MCF 10A (cell line): ENCODE measurements at regions of chr19 and their contacts with region 1.

Region 1: GRCh38 chr19:54390942-54391577 is 24.2 kb upstream of the TTYH1 start:
- DNase-seq: peak; percentile 69
- H3K4me3 Mint-ChIP-seq: no peak overlapping the region
- H3K27ac Mint-ChIP-seq: no peak overlapping the region
- H3K4me1 Mint-ChIP-seq: peaks cover 6% of the 10 kb centered on the region
- H3K27me3 Mint-ChIP-seq: peaks cover 40% of the 10 kb centered on the region
- CTCF ChIP-seq: peak; percentile 76

Region 2: GRCh38 chr19:54168174-54168917 is 222.7 kb before region 1 on chr19:
- CTCF ChIA-PET with region 1: interaction called, 15 read pairs
- POLR2A ChIA-PET with region 1: no interaction called
- intact Hi-C with region 1: no loop called
- DNase-seq: peak; percentile 86
- H3K4me3 Mint-ChIP-seq: no peak overlapping the region
- H3K27ac Mint-ChIP-seq: no peak overlapping the region
- H3K4me1 Mint-ChIP-seq: peaks cover 6% of the 10 kb centered on the region
- H3K27me3 Mint-ChIP-seq: no peaks in the 10 kb centered on the region
- CTCF ChIP-seq: peak; percentile 82

Region 3: DNA sequence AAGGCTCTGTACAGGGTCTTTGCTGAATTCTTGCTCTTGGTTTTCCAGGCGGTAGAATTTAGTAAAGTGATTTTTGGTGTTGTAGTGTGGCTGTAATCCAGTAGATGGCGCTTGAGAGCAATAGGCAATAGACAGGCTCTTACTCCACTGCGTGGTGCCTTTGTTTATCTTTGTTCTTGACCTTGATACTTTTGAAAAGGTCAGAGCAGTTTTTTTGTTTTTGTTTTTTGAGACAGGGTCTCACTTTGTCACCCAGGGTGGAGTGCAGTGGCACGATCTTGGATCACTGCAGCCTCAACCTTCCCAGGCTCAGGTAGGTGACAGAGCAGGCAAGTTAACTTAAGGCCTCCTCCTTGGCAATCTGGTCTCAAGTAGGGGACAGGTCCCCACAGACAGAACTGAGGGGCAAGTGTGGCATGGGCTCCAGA is 65.9 kb before region 1 on chr19:
- CTCF ChIA-PET with region 1: interaction called, 79 read pairs
- POLR2A ChIA-PET with region 1: no interaction called
- intact Hi-C with region 1: loop called (anchors 1 kb)
- DNase-seq: peak; percentile 54
- H3K4me3 Mint-ChIP-seq: no peak overlapping the region
- H3K27ac Mint-ChIP-seq: no peak overlapping the region
- H3K4me1 Mint-ChIP-seq: no peaks in the 10 kb centered on the region
- H3K27me3 Mint-ChIP-seq: peaks cover 37% of the 10 kb centered on the region
- CTCF ChIP-seq: peak; percentile 72

Region 4: DNA sequence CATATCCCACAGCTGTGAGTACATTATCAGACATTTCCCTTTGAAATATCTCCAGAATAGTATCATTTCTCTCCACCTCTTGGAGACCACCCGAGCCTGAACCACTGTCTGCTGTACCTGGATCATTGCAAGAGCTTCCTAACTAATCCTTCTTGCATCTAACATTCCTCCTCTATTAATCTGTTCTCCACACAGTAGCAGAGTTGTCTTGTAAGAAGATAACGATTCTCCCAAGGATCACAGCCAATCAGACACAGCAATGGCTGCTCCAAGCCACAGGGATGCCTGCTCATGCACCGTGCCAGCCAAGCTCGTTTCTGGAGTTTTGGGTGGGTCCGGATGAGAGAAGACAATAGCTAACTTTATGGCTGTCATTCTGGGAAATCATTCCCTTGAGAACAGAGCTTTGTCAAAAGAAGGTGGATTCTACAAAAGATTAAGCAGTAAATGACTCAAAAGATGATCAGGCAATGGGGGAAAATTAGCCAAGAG is 11.8 kb before region 1 on chr19:
- CTCF ChIA-PET with region 1: interaction called, 22 read pairs
- POLR2A ChIA-PET with region 1: no interaction called
- intact Hi-C with region 1: no loop called
- DNase-seq: no peak
- H3K4me3 Mint-ChIP-seq: no peak overlapping the region
- H3K27ac Mint-ChIP-seq: no peak overlapping the region
- H3K4me1 Mint-ChIP-seq: no peaks in the 10 kb centered on the region
- H3K27me3 Mint-ChIP-seq: peaks cover 10% of the 10 kb centered on the region
- CTCF ChIP-seq: no peak

Region 5: GRCh38 chr19:54418030-54418929 is 27.2 kb after region 1 on chr19:
- CTCF ChIA-PET with region 1: interaction called, 10 read pairs
- POLR2A ChIA-PET with region 1: no interaction called
- intact Hi-C with region 1: no loop called
- DNase-seq: no peak
- H3K4me3 Mint-ChIP-seq: no peak overlapping the region
- H3K27ac Mint-ChIP-seq: no peak overlapping the region
- H3K4me1 Mint-ChIP-seq: no peaks in the 10 kb centered on the region
- H3K27me3 Mint-ChIP-seq: peaks cover 27% of the 10 kb centered on the region
- CTCF ChIP-seq: no peak

Region 6: DNA sequence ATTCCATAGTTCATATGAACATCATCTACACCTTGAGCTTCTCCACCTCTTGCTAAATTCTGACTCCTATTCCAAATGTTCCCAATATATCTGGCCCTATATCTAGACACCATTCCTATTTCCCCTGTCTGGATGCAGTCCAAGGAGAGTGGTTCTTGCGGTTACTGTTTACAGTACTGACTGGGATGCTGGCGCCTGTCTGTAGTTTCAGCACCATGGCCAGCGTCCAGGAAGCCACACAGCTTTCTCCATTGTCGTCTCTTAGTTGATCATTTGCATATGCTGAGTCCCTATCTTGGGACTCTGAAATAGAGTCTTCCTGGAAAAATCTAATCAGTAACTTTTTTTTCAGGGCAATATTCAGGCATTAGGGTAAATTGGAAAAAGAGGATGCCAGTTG is 126.4 kb after region 1 on chr19:
- CTCF ChIA-PET with region 1: no interaction called
- POLR2A ChIA-PET with region 1: no interaction called
- intact Hi-C with region 1: no loop called
- DNase-seq: peak; percentile 77
- H3K4me3 Mint-ChIP-seq: no peak overlapping the region
- H3K27ac Mint-ChIP-seq: no peak overlapping the region
- H3K4me1 Mint-ChIP-seq: no peaks in the 10 kb centered on the region
- H3K27me3 Mint-ChIP-seq: no peaks in the 10 kb centered on the region
- CTCF ChIP-seq: no peak